ENCODE measurements at regions of chr2 and their contacts with region 1.

Region 1: DNA sequence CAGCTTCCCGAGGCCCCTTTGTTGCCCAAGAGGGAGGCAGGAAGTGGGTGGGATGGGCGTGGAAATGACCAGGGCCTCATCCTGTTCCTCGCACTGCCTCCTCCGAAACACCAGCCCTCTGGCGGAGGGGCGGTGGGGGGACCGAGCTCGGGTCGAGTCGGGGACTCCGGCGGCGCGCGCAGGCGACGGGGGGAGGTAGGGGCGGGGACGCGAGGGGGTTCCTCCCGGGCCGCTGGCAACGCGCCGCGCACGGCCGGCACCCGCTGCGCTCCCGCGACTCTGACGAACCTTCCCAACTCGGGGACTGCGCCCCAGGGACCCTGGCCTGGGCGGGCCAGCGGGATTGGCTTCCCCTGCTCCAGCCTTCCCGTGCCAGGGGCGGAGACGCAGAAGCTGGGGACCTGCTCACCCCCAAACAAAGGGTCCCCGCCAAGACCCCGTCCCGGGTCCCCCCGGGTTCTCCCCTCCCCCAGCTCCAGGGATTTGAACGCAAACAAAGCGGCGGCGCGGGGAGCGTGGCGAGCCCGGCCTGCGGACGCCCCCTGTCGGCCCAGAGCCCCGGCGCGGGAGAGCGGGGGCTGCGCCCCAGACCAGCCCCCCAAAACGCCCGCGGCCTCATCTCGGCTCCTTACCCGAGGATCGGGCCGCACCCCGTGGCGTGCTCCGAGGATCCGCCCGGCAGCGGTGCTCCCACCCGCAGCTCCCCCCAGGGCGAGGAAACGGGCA is 1.2 kb downstream of the SEMA4C start:
- DNase-seq: peak; percentile 94 to 97
- H3K4me3 ChIP-seq: peak overlapping the region; percentile 97 to 98
- H3K27ac ChIP-seq: peak overlapping the region; percentile 98 to 100
- H3K4me1 ChIP-seq: peaks cover 0 to 69% (median 45%) of the 10 kb centered on the region in 4 donors
- H3K27me3 ChIP-seq: no peaks in the 10 kb centered on the region
- CTCF ChIP-seq: peak; percentile 53 to 57

Region 2: DNA sequence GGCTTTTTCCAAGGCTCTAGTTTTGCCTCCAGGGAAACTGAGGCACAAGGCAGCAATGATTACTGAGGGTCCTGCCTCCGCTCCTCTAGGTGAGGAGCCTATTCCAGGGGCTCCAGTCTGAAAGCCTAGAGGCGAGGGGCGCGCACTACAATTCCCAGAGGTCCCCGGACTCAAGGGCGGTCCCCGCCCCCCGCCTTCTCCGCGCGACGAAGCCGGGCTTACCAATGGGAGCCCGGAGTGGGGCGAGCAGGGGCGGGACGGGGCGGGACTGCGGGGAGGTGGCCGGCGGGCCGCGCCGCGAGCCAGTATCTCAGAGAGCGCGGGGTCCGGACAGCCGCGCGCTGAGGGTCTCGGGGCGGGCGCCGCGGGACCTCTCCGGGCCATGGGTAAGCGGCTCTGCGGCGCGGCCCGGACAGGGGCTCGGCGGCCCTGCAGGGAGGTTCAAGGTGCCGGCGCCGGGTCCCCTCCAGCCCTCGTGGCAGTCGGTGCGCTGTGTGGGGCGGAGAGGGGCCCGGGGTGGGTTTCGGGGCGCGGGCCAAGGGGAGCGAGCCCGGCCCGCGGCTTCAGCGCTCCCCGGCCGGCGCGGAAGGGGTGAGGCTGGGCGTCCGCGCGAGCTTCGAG is 332.2 kb before region 1 on chr2 and contains the start of gene ARID5A:
- intact Hi-C with region 1: loop called (anchors 5 kb)
- DNase-seq: peak; percentile 94 to 97
- H3K4me3 ChIP-seq: peak within 1 kb of the TSS; percentile 79 to 88
- H3K27ac ChIP-seq: peak within 1 kb of the TSS; percentile 94 to 97
- H3K4me1 ChIP-seq: peaks cover 10 to 83% (median 75%) of the 10 kb centered on the region in 4 donors
- H3K27me3 ChIP-seq: no peaks in the 10 kb centered on the region
- CTCF ChIP-seq: peak; percentile 55 to 60

Region 3: DNA sequence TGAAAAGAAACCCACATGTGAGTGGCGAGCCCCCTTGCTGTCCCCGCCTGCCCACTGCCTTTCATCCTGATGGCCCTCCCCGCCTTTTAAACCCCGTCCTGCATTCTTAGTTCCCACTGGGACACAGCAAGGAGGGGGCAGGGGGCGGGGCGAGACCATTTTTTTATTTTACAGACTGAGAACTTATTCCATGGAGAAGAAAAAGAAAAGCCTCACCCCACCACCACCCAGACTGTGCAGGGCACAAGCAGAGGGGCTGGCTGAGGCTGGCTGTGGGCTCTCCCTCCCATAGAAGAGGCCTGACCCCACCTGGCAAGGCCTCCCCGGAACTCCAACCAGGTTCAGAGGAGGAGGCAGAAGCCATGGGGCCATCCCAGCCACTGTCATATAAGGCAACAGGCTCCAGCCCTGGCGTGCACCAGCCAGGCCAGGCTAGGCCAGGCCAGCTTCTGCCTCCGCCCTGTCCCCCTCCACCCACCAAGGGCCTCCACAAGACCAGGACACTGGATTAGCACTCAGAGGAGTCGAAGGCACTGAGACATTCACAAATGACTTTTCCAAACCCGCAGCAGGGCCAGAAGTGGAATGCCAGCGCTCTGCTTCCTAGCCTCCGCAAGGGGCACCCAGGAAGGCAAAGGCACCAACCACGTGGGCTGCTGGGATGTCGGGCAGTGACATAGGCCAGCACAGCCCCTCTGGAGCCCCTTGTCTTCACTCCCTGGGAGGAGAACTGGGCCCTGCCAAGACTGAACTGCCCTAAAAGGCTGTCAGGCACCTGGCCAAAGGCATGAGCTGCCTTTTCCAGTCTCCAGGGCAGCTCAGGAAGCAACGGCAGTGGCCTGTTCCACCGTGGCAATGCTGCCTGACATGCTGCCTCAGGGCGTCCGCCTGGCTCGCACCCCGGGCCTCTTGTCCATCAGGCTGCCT is 38.7 kb after region 1 on chr2:
- intact Hi-C with region 1: loop called (anchors 1 kb)
- DNase-seq: peak; percentile 92 to 98
- H3K4me3 ChIP-seq: peak overlapping the region; percentile 42 to 43
- H3K27ac ChIP-seq: peak overlapping the region; percentile 87 to 97
- H3K4me1 ChIP-seq: peaks cover 7 to 55% (median 32%) of the 10 kb centered on the region in 4 donors
- H3K27me3 ChIP-seq: no peaks in the 10 kb centered on the region
- CTCF ChIP-seq: peak in 1 of 2 experiments; percentile 29

Region 4: GRCh38 chr2:96945012-96945804 is 76.5 kb after region 1 on chr2:
- intact Hi-C with region 1: no loop called
- DNase-seq: no peak
- H3K4me3 ChIP-seq: no peak overlapping the region
- H3K27ac ChIP-seq: no peak overlapping the region
- H3K4me1 ChIP-seq: peaks cover 0 to 1% (median 0%) of the 10 kb centered on the region in 4 donors
- H3K27me3 ChIP-seq: peaks cover 0 to 11% of the 10 kb centered on the region in 2 donors
- CTCF ChIP-seq: no peak

Measured in tibial artery (tissue), 4 donors.